Ovary (tissue), 10 donors: ENCODE measurements at regions of chr3 and their contacts with region 1.

Region 1: GRCh38 chr3:156151824-156152428 is 31.5 kb downstream of the KCNAB1 start:
- DNase-seq: peak; percentile 38 to 73 (median 47)
- H3K4me3 ChIP-seq: no peak overlapping the region
- H3K27ac ChIP-seq: no peak overlapping the region
- H3K4me1 ChIP-seq: peaks cover 11% of the 10 kb centered on the region
- H3K27me3 ChIP-seq: no peaks in the 10 kb centered on the region
- CTCF ChIP-seq: peak in 2 of 3 donors; percentile 14 to 51
- EP300 ChIP-seq: no peak
- POLR2A ChIP-seq: no peak

Region 2: GRCh38 chr3:156509189-156510174 is 357.6 kb after region 1 on chr3:
- intact Hi-C with region 1: loop called in 2 of 4 experiments (anchors 5 to 10 kb)
- DNase-seq: no peak
- H3K4me3 ChIP-seq: no peak overlapping the region
- H3K27ac ChIP-seq: no peak overlapping the region
- H3K4me1 ChIP-seq: no peaks in the 10 kb centered on the region
- H3K27me3 ChIP-seq: no peaks in the 10 kb centered on the region
- CTCF ChIP-seq: peak; percentile 26 to 66 (median 52)
- EP300 ChIP-seq: no peak
- POLR2A ChIP-seq: no peak

Region 3: GRCh38 chr3:156519758-156520162 is 367.8 kb after region 1 on chr3:
- intact Hi-C with region 1: loop called in 3 of 4 experiments (anchors 5 to 10 kb)
- DNase-seq: no peak
- H3K4me3 ChIP-seq: no peak overlapping the region
- H3K27ac ChIP-seq: no peak overlapping the region
- H3K4me1 ChIP-seq: peaks cover 6% of the 10 kb centered on the region
- H3K27me3 ChIP-seq: no peaks in the 10 kb centered on the region
- CTCF ChIP-seq: no peak
- EP300 ChIP-seq: no peak
- POLR2A ChIP-seq: no peak